Left cardiac atrium (tissue), 4 donors: ENCODE measurements at regions of chr9 and their contacts with region 1.

Region 1: GRCh38 chr9:71368157-71368556 is 246.7 kb upstream of the TRPM3 start:
- DNase-seq: peak; percentile 20
- ATAC-seq: no peak

Region 2: GRCh38 chr9:71306134-71306533 is 62.0 kb before region 1 on chr9:
- intact Hi-C with region 1: loop called in 1 of 2 experiments (anchors 10 kb)
- DNase-seq: no peak
- ATAC-seq: no peak